GM12878 (cell line): ENCODE measurements at regions of chr22 and their contacts with region 1.

Region 1: DNA sequence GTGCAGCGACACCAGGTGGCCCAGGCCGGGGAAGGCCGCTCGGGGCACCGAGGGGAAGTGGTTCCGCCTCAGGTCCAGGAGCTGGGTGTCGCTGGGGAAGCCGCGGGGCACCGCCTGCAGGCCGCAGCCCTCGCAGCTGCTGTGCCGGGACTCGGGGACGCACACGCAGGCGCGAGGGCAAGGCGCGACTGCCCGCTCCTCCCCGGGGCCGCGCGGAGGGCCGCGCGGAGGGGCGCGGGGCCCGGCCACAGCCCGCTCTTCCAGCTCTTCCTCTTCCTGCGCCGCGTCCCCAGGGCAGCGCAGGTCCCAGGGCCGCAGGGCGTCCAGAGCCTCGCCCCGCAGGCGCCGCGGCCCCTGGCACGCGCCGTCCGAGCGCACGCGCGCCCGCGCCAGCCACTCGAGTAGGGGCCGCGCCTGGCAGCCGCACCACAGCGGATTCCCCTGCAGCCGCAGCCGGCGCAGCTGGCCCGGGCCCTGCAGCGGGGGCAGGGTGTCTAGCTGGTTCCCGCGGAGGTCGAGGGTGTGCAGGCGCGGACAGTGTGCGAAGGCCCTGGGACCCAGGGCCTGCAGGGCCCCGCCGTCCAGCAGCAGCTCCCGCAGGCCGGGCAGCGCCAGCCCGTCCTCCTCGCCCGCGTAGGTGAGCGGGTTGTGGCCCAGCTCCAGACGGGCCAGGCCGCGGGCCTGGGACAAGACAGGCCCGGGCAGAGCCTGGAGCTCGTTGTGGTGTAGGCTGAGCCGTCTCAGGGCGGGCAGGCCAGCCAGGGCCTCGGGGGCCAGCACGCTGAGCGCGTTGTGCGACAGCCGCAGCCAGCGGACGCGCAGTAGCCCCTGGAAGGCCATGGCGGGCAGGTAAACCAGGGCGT is 2.8 kb downstream of the CHADL start:
- DNase-seq: peak; percentile 21
- ATAC-seq: peak; percentile 95
- H3K4me3 ChIP-seq: peak overlapping the region; percentile 47; the same call in 1 of the 2 replicates
- H3K27ac ChIP-seq: no peak overlapping the region
- H3K4me1 ChIP-seq: peaks cover 3% of the 10 kb centered on the region; the same call in 1 of the 2 replicates
- H3K27me3 ChIP-seq: no peaks in the 10 kb centered on the region; a peak in 1 of 4 replicates
- CTCF ChIP-seq: peak; percentile 76 to 89 (median 78)
- EP300 ChIP-seq: no peak
- POLR2A ChIP-seq: peak; percentile 67; the same call in 1 of the 2 replicates
- RAD21 ChIP-seq: peak; percentile 71

Region 2: GRCh38 chr22:40928657-40929056 is 309.3 kb before region 1 on chr22:
- CTCF ChIA-PET with region 1: interaction called, 136 read pairs
- POLR2A ChIA-PET with region 1: no interaction called
- RAD21 ChIA-PET with region 1: interaction called, 101 read pairs
- SMC1A ChIA-PET with region 1: interaction called, 73 read pairs
- in situ Hi-C with region 1: no loop called
- intact Hi-C with region 1: loop called (anchors 2 kb)
- DNase-seq: no peak
- ATAC-seq: no peak
- H3K4me3 ChIP-seq: no peak overlapping the region
- H3K27ac ChIP-seq: no peak overlapping the region
- H3K4me1 ChIP-seq: no peaks in the 10 kb centered on the region
- H3K27me3 ChIP-seq: no peaks in the 10 kb centered on the region
- CTCF ChIP-seq: no peak
- EP300 ChIP-seq: no peak
- POLR2A ChIP-seq: no peak
- RAD21 ChIP-seq: no peak

Region 3: GRCh38 chr22:41226723-41227655 is 10.9 kb before region 1 on chr22:
- CTCF ChIA-PET with region 1: no interaction called
- POLR2A ChIA-PET with region 1: no interaction called
- RAD21 ChIA-PET with region 1: no interaction called
- SMC1A ChIA-PET with region 1: no interaction called
- in situ Hi-C with region 1: no loop called
- intact Hi-C with region 1: no loop called
- DNase-seq: no peak
- ATAC-seq: no peak
- H3K4me3 ChIP-seq: no peak overlapping the region
- H3K27ac ChIP-seq: no peak overlapping the region
- H3K4me1 ChIP-seq: no peaks in the 10 kb centered on the region
- H3K27me3 ChIP-seq: no peaks in the 10 kb centered on the region
- CTCF ChIP-seq: no peak
- EP300 ChIP-seq: no peak
- POLR2A ChIP-seq: no peak
- RAD21 ChIP-seq: no peak

Region 4: GRCh38 chr22:41280066-41280465 is 42.1 kb after region 1 on chr22:
- CTCF ChIA-PET with region 1: no interaction called
- POLR2A ChIA-PET with region 1: no interaction called
- RAD21 ChIA-PET with region 1: no interaction called
- SMC1A ChIA-PET with region 1: no interaction called
- in situ Hi-C with region 1: no loop called
- intact Hi-C with region 1: no loop called
- DNase-seq: no peak
- ATAC-seq: no peak
- H3K4me3 ChIP-seq: no peak overlapping the region
- H3K27ac ChIP-seq: no peak overlapping the region
- H3K4me1 ChIP-seq: peaks cover 2% of the 10 kb centered on the region; the same call in 1 of the 2 replicates
- H3K27me3 ChIP-seq: no peaks in the 10 kb centered on the region
- CTCF ChIP-seq: no peak
- EP300 ChIP-seq: no peak
- POLR2A ChIP-seq: no peak
- RAD21 ChIP-seq: no peak